ENCODE measurements at regions of chr6 and their contacts with region 1.

Region 1: DNA sequence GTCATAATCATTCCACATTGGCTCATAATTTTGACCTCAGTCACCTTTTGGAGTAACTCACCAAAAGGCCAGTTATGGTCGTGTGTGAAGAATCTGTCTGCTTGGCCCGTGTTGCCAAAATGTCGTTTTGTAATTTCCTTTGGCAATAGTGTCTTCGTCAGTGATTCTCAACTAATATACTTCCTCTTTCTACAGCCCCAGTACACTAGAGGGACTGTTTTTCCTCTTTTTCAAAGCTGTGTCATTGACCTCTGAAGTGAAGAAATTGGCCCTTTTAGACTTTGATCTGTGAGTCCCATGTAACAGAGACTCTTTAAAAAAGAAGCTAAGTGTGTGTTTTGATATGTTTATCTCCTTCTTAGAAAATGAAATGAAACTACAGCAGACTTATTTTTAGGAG is 5.2 kb downstream of the FOXO3 start:
- DNase-seq: no peak
- H3K4me3 ChIP-seq: no peak overlapping the region
- H3K4me3 Mint-ChIP-seq: peak overlapping the region in 7 of 8 donors; percentile 26 to 81 (median 59)
- H3K27ac ChIP-seq: peak overlapping the region; percentile 35
- H3K27ac Mint-ChIP-seq: peak overlapping the region; percentile 1 to 81 (median 71)
- H3K4me1 ChIP-seq: peaks cover 63% of the 10 kb centered on the region
- H3K4me1 Mint-ChIP-seq: peaks cover 57 to 79% (median 66%) of the 10 kb centered on the region in 4 donors
- H3K27me3 ChIP-seq: no peaks in the 10 kb centered on the region
- H3K27me3 Mint-ChIP-seq: no peaks in the 10 kb centered on the region

Region 2: GRCh38 chr6:108581237-108581931 is 15.5 kb after region 1 on chr6:
- CTCF ChIA-PET with region 1: interaction called, 7 read pairs
- POLR2A ChIA-PET with region 1: interaction called, 25 read pairs
- intact Hi-C with region 1: loop called (anchors 2 kb)
- DNase-seq: peak in 2 of 5 donors; percentile 17 to 38
- H3K4me3 ChIP-seq: peak overlapping the region; percentile 1 to 17
- H3K4me3 Mint-ChIP-seq: peak overlapping the region; percentile 47 to 84 (median 78)
- H3K27ac ChIP-seq: no peak overlapping the region
- H3K27ac Mint-ChIP-seq: peak overlapping the region; percentile 73 to 94 (median 87)
- H3K4me1 ChIP-seq: peaks cover 66% of the 10 kb centered on the region
- H3K4me1 Mint-ChIP-seq: peaks cover 50 to 80% (median 66%) of the 10 kb centered on the region in 4 donors
- H3K27me3 ChIP-seq: no peaks in the 10 kb centered on the region
- H3K27me3 Mint-ChIP-seq: no peaks in the 10 kb centered on the region

Region 3: GRCh38 chr6:108592371-108593337 is 26.8 kb after region 1 on chr6:
- CTCF ChIA-PET with region 1: interaction called, 3 read pairs
- POLR2A ChIA-PET with region 1: no interaction called
- intact Hi-C with region 1: loop called (anchors 1 kb)
- DNase-seq: peak; percentile 60 to 69 (median 67)
- H3K4me3 ChIP-seq: no peak overlapping the region
- H3K4me3 Mint-ChIP-seq: peak overlapping the region in 7 of 8 donors; percentile 18 to 73 (median 42)
- H3K27ac ChIP-seq: no peak overlapping the region
- H3K27ac Mint-ChIP-seq: peak overlapping the region; percentile 22 to 77 (median 61)
- H3K4me1 ChIP-seq: peaks cover 43% of the 10 kb centered on the region
- H3K4me1 Mint-ChIP-seq: peaks cover 42 to 77% (median 56%) of the 10 kb centered on the region in 4 donors
- H3K27me3 ChIP-seq: no peaks in the 10 kb centered on the region
- H3K27me3 Mint-ChIP-seq: no peaks in the 10 kb centered on the region